ENCODE measurements at regions of chr6 and their contacts with region 1.

Region 1: GRCh38 chr6:47621838-47622449 is 76.4 kb upstream of the ADGRF4 start:
- DNase-seq: no peak
- CTCF ChIP-seq: no peak

Region 2: DNA sequence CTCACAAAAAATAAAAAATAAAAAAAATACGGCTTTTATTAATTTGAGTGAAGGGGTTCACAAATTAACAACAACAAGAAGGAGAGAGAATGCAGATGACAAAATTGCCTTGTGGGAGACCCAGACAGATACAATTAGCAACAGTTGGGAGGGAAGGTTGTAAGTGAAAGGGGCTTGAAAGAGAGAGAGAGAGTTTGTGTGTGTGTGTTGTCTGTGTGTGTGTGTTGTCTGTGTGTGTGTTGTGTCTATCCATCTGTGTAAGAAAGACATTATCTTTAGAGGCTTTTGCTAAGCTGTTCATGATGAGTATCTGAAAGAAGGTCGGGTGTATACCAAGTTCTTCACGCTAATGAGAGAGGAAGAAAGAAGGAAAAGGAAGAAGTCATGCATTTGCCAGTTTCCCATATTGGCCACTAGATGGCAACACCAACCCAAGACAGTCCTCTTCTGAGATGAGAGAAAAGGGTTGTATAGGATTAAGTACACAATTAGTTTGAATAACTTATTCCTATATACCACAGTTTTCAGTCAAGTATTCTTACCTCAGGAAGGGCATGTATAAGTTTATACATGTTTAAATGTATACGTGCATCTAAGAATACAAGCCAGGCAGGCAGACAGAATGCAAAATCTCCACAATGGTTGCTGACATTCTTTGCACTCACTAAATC is 208.1 kb before region 1 on chr6:
- in situ Hi-C with region 1: loop called (anchors 10 kb)
- DNase-seq: peak; percentile 59
- CTCF ChIP-seq: peak; percentile 81

Region 3: GRCh38 chr6:48032151-48032550 is 410.2 kb after region 1 on chr6:
- in situ Hi-C with region 1: no loop called
- DNase-seq: no peak
- CTCF ChIP-seq: no peak

Measured in GM13976 (cell line).